ENCODE measurements at regions of chr10 and their contacts with region 1.

Region 1: GRCh38 chr10:101214446-101215396 is 14.5 kb downstream of the LBX1 start:
- DNase-seq: peak; percentile 82
- H3K4me3 Mint-ChIP-seq: peak overlapping the region; percentile 31
- H3K27ac Mint-ChIP-seq: no peak overlapping the region
- H3K4me1 Mint-ChIP-seq: peaks cover 44% of the 10 kb centered on the region
- H3K27me3 Mint-ChIP-seq: peaks cover 70% of the 10 kb centered on the region

Region 2: DNA sequence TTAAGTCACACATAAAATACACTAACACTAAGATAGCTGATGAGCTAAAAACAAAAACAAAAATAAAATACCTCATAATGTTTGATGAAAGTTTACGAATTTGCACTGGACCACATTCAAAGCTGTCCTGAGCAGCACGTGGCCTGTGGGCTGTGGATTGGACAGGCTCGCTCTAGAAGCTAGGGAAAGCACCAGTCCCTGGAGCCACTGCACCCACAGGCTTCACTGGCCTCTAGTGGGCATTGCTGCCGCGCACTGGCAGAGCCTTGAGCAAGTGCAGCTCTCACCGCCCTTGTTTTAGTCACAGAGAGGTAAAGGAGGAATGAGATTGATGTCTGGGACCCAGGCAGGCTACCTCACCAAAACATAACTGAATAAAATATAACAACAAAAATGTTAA is 401.7 kb before region 1 on chr10:
- CTCF ChIA-PET with region 1: no interaction called
- POLR2A ChIA-PET with region 1: no interaction called
- intact Hi-C with region 1: no loop called
- DNase-seq: no peak
- H3K4me3 Mint-ChIP-seq: no peak overlapping the region
- H3K27ac Mint-ChIP-seq: no peak overlapping the region
- H3K4me1 Mint-ChIP-seq: no peaks in the 10 kb centered on the region
- H3K27me3 Mint-ChIP-seq: peaks cover 35% of the 10 kb centered on the region

Region 3: DNA sequence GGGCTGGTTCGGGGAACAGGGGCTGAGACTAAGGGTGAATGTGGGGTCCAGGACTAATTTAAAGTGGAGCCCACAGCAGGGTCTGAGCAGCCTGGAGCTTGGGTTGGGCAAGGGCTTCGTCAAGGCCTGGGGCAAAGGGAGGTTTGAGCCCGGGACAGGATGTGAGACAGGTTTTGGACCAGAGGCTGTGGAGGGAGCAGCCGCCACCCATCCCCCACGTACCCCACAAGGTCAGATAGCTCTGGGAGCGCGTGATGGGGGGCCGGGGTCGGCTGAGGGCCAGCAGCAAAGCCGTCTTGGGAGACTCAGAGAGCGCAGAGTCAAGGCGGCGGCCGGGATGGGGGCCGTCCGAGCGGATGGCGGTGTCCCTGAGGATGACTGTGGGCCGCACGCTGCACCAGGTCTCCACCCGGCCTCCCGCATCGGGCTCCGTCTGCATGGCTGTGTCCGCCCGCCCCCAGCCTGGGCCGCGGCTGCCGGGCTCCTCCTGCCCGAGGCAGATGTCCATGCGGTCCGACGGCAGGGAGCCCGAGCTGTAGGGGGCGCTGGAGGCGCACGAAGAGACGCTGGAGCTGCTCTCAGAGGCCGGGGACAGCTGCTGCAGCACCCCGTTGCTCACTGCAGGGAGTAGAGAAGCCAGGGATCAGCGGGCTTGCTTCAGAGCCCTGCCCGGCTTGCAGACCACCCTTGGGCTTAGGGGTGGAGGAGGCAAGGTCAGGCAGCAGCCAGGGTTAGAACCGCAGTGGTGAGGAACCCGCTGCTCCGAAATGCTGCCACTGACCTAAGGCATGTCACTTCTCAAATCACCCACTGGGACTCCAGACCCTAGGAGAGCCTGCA is 195.9 kb before region 1 on chr10:
- CTCF ChIA-PET with region 1: no interaction called
- POLR2A ChIA-PET with region 1: no interaction called
- intact Hi-C with region 1: no loop called
- DNase-seq: peak; percentile 89
- H3K4me3 Mint-ChIP-seq: no peak overlapping the region
- H3K27ac Mint-ChIP-seq: no peak overlapping the region
- H3K4me1 Mint-ChIP-seq: peaks cover 15% of the 10 kb centered on the region
- H3K27me3 Mint-ChIP-seq: peaks cover 38% of the 10 kb centered on the region

Region 4: GRCh38 chr10:101228153-101228973 is 13.6 kb after region 1 on chr10:
- CTCF ChIA-PET with region 1: interaction called, 41 read pairs
- POLR2A ChIA-PET with region 1: no interaction called
- intact Hi-C with region 1: no loop called
- DNase-seq: no peak
- H3K4me3 Mint-ChIP-seq: peak overlapping the region; percentile 3
- H3K27ac Mint-ChIP-seq: no peak overlapping the region
- H3K4me1 Mint-ChIP-seq: peaks cover 35% of the 10 kb centered on the region
- H3K27me3 Mint-ChIP-seq: peaks cover 68% of the 10 kb centered on the region

Region 5: GRCh38 chr10:101272229-101272868 is 57.6 kb after region 1 on chr10:
- CTCF ChIA-PET with region 1: interaction called, 31 read pairs
- POLR2A ChIA-PET with region 1: no interaction called
- intact Hi-C with region 1: no loop called
- DNase-seq: peak; percentile 73
- H3K4me3 Mint-ChIP-seq: no peak overlapping the region
- H3K27ac Mint-ChIP-seq: no peak overlapping the region
- H3K4me1 Mint-ChIP-seq: no peaks in the 10 kb centered on the region
- H3K27me3 Mint-ChIP-seq: peaks cover 15% of the 10 kb centered on the region

Region 6: GRCh38 chr10:101297901-101298486 is 83.3 kb after region 1 on chr10:
- CTCF ChIA-PET with region 1: interaction called, 82 read pairs
- POLR2A ChIA-PET with region 1: no interaction called
- intact Hi-C with region 1: no loop called
- DNase-seq: peak; percentile 84
- H3K4me3 Mint-ChIP-seq: no peak overlapping the region
- H3K27ac Mint-ChIP-seq: no peak overlapping the region
- H3K4me1 Mint-ChIP-seq: no peaks in the 10 kb centered on the region
- H3K27me3 Mint-ChIP-seq: peaks cover 39% of the 10 kb centered on the region

Region 7: GRCh38 chr10:101467286-101467770 is 252.6 kb after region 1 on chr10:
- CTCF ChIA-PET with region 1: interaction called, 42 read pairs
- POLR2A ChIA-PET with region 1: no interaction called
- intact Hi-C with region 1: loop called (anchors 1 kb)
- DNase-seq: peak; percentile 15
- H3K4me3 Mint-ChIP-seq: no peak overlapping the region
- H3K27ac Mint-ChIP-seq: no peak overlapping the region
- H3K4me1 Mint-ChIP-seq: peaks cover 2% of the 10 kb centered on the region
- H3K27me3 Mint-ChIP-seq: no peaks in the 10 kb centered on the region